Left cardiac atrium (tissue), 4 donors: ENCODE measurements at regions of chr15 and their contacts with region 1.

Region 1: DNA sequence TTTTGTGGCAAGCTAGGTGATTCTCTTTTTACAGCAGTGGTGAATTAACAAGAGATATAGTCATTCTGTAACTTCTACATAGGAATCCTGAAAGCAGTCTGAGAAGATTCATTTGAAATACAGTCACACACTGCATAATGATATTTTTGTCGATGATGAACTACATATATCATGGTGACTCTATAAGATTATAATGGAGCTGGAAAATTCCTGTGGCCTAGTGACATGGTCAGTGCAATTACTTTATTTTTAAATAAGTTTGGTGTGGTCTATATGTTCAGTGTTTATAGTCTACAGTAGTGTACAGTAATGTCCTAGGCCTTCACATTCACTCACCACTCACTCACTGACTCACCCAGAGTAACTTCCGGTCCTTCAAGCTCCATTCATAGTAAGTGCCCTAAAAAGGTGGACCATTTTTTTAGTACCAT is 511.4 kb upstream of the MCTP2 start:
- DNase-seq: no peak
- ATAC-seq: no peak

Region 2: GRCh38 chr15:93235926-93236780 is 483.8 kb before region 1 on chr15:
- intact Hi-C with region 1: no loop called
- DNase-seq: peak; percentile 35
- ATAC-seq: peak; percentile 55 to 91

Region 3: DNA sequence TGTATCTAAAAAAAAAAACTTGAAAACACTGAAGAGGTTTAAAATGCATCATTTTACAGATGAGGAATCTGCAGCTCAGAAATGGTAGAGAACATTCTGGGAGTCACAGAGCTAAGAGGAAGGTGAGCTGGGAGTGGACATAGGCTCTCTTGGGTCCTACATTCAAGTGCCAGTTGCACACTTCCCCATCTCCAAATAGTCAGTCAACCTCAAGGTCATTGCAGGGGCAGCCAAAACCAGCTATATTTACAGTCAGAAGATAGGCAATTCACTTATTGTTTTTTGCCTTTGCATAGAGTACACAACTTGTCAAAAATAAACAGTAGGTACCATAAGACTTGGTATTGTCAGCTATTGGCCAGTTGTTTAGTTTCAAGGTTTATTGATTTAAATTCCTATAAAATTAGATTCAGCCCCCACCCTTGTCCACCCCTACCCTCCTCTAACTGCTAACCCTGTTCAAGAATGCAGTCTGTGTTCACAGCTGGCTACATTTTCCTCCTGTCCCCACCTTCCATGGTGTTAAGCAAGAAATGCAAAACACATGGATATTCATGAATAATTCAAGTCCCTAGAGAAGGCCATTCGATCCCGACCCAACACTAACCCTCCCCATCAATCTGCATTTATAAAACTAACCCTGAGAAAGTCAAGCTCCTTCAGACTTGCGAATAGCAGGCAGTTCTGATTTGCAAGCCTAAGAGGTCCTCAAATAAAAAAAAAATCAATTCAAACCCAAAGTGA is 55.6 kb before region 1 on chr15:
- intact Hi-C with region 1: loop called in 1 of 2 experiments (anchors 10 kb)
- DNase-seq: no peak
- ATAC-seq: peak in 1 of 2 donors; percentile 50

Region 4: GRCh38 chr15:93954985-93955748 is 235.2 kb after region 1 on chr15:
- intact Hi-C with region 1: no loop called
- DNase-seq: no peak
- ATAC-seq: no peak